ENCODE measurements at regions of chr7 and their contacts with region 1.

Region 1: GRCh38 chr7:142690554-142691182 is 58.6 kb upstream of the PRSS1 start:
- DNase-seq: no peak
- ATAC-seq: no peak
- H3K4me3 ChIP-seq: no peak overlapping the region
- H3K4me3 Mint-ChIP-seq: no peak overlapping the region
- H3K27ac ChIP-seq: no peak overlapping the region
- H3K27ac Mint-ChIP-seq: peak overlapping the region; percentile 71 to 78
- H3K4me1 ChIP-seq: peaks cover 1 to 11% of the 10 kb centered on the region in 2 experiments
- H3K4me1 Mint-ChIP-seq: peaks cover 22 to 34% (median 25%) of the 10 kb centered on the region in 3 donors
- H3K27me3 ChIP-seq: no peaks in the 10 kb centered on the region
- H3K27me3 Mint-ChIP-seq: no peaks in the 10 kb centered on the region

Region 2: GRCh38 chr7:142231716-142232115 is 459.0 kb before region 1 on chr7:
- CTCF ChIA-PET with region 1: no interaction called
- POLR2A ChIA-PET with region 1: no interaction called
- DNase-seq: no peak
- ATAC-seq: no peak
- H3K4me3 ChIP-seq: no peak overlapping the region
- H3K4me3 Mint-ChIP-seq: no peak overlapping the region
- H3K27ac ChIP-seq: no peak overlapping the region
- H3K27ac Mint-ChIP-seq: no peak overlapping the region
- H3K4me1 ChIP-seq: no peaks in the 10 kb centered on the region
- H3K4me1 Mint-ChIP-seq: no peaks in the 10 kb centered on the region
- H3K27me3 ChIP-seq: peaks cover 0 to 17% of the 10 kb centered on the region in 2 experiments
- H3K27me3 Mint-ChIP-seq: peaks cover 7 to 19% of the 10 kb centered on the region in 2 donors

Region 3: DNA sequence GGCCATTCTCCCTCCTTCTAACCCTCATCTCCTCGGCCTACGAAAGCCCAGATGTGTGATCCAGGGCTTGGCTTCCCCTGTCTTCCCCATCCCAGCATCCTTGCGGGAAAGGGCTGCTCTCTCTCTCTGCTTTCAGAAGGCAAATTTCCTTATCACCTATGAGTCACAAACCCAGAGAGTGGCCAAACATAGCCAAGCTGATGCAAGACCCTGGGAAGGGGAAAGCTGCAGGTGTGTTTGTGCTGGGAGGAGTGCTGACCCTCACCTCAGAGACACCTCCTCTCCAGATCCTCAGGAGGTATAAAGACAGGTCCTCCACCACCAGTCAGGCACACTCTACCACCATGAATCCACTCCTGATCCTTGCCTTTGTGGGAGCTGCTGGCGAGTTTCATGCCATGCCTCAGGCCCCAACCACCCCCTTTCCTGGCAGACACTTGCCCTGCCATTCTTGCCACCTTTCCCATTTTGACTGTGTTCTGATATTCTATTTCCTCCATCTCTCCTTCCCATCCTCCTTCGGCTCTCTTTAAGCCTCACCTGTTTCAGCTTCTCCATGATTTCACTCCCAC is 69.5 kb after region 1 on chr7:
- CTCF ChIA-PET with region 1: interaction called in 1 of 2 experiments, 12 read pairs
- POLR2A ChIA-PET with region 1: no interaction called
- DNase-seq: no peak
- ATAC-seq: no peak
- H3K4me3 ChIP-seq: no peak overlapping the region
- H3K4me3 Mint-ChIP-seq: no peak overlapping the region
- H3K27ac ChIP-seq: no peak overlapping the region
- H3K27ac Mint-ChIP-seq: no peak overlapping the region
- H3K4me1 ChIP-seq: no peaks in the 10 kb centered on the region
- H3K4me1 Mint-ChIP-seq: no peaks in the 10 kb centered on the region
- H3K27me3 ChIP-seq: no peaks in the 10 kb centered on the region
- H3K27me3 Mint-ChIP-seq: no peaks in the 10 kb centered on the region

Measured in T-cell (primary cell).